Tibial artery (tissue), 4 donors: ENCODE measurements at regions of chr9 and their contacts with region 1.

Region 1: GRCh38 chr9:131037335-131038255 is 28.6 kb downstream of the LAMC3 start:
- DNase-seq: no peak
- H3K4me3 ChIP-seq: no peak overlapping the region
- H3K27ac ChIP-seq: peak overlapping the region; percentile 53 to 66
- H3K4me1 ChIP-seq: peaks cover 0 to 20% (median 18%) of the 10 kb centered on the region in 4 donors
- H3K27me3 ChIP-seq: no peaks in the 10 kb centered on the region
- CTCF ChIP-seq: no peak

Region 2: GRCh38 chr9:130866474-130866965 is 171.1 kb before region 1 on chr9:
- intact Hi-C with region 1: loop called (anchors 10 kb)
- DNase-seq: peak in 1 of 2 donors; percentile 70
- H3K4me3 ChIP-seq: no peak overlapping the region
- H3K27ac ChIP-seq: peak overlapping the region in 1 of 2 donors; percentile 27
- H3K4me1 ChIP-seq: peaks cover 0 to 81% (median 29%) of the 10 kb centered on the region in 4 donors
- H3K27me3 ChIP-seq: no peaks in the 10 kb centered on the region
- CTCF ChIP-seq: peak; percentile 76 to 77

Region 3: DNA sequence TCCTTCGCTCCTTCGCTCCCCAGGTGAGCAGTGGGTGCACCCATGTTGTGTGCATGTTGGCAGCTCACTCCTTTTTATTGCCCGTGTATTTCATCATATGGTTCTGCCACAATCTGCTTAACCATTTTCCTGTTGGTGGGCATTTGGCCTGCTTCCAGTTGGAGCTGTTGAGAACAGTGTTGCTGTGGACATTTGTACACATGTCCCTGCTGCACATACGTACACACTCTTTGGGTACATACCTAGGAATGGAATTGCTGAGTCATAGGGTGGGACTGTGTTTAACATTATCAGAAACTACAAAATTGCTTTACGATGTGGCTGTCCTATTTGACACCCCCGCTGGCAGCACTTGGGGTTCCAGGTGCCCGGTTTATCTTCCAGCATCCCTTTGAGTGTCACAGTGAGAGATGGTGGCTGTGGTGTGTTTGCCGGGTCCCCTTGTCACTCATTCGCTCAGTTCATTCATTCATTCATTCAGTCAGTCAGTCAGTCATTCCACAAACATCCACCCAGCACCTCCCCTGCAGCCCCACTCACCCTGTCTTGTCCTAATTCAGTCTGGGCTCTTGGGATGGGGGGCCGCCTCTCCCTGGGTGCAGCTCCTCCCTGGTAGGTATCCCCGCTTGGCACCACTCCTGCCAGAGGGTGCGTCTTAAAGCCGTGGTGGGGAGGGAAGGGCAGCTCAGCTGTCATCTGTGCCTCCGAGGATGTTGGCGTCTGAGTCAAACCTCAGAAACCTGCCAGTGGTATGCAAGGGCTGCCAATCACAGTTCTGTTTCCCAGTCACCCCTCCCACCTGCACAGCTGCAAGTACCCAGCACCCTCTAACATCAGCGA is 90.6 kb before region 1 on chr9:
- intact Hi-C with region 1: loop called (anchors 5 kb)
- DNase-seq: no peak
- H3K4me3 ChIP-seq: no peak overlapping the region
- H3K27ac ChIP-seq: no peak overlapping the region
- H3K4me1 ChIP-seq: no peaks in the 10 kb centered on the region
- H3K27me3 ChIP-seq: peaks cover 0 to 20% of the 10 kb centered on the region in 2 donors
- CTCF ChIP-seq: no peak

Region 4: DNA sequence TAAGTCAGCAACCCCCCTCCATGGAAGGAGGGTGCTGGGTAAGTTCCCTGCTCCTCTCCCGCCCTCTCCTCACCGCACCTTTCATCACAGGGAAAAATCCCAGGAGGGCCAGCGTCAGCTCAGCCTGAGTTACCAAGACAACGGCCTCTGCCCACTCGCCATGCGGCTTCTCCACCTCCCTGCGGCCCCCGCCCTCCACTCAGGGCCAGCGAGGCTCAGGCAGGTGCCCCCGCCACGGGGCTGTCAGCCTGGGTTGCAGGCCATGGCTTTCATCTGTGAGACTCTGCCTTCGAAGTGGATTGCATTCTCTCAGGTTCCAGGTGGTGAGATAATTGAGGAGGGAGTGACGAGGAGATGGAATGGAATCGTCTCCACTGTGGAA is 55.8 kb before region 1 on chr9:
- intact Hi-C with region 1: no loop called
- DNase-seq: no peak
- H3K4me3 ChIP-seq: no peak overlapping the region
- H3K27ac ChIP-seq: no peak overlapping the region
- H3K4me1 ChIP-seq: no peaks in the 10 kb centered on the region
- H3K27me3 ChIP-seq: peaks cover 0 to 54% of the 10 kb centered on the region in 2 donors
- CTCF ChIP-seq: no peak

Region 5: GRCh38 chr9:131096269-131097125 is 58.9 kb after region 1 on chr9 and contains the start of gene AIF1L:
- intact Hi-C with region 1: no loop called
- DNase-seq: peak in 1 of 2 donors; percentile 74
- H3K4me3 ChIP-seq: peak within 1 kb of the TSS; percentile 77 to 83
- H3K27ac ChIP-seq: peak within 1 kb of the TSS; percentile 81 to 83
- H3K4me1 ChIP-seq: peaks cover 0 to 58% (median 45%) of the 10 kb centered on the region in 4 donors
- H3K27me3 ChIP-seq: peaks cover 0 to 28% of the 10 kb centered on the region in 2 donors
- CTCF ChIP-seq: no peak